ENCODE measurements at regions of chr15 and their contacts with region 1.

Region 1: DNA sequence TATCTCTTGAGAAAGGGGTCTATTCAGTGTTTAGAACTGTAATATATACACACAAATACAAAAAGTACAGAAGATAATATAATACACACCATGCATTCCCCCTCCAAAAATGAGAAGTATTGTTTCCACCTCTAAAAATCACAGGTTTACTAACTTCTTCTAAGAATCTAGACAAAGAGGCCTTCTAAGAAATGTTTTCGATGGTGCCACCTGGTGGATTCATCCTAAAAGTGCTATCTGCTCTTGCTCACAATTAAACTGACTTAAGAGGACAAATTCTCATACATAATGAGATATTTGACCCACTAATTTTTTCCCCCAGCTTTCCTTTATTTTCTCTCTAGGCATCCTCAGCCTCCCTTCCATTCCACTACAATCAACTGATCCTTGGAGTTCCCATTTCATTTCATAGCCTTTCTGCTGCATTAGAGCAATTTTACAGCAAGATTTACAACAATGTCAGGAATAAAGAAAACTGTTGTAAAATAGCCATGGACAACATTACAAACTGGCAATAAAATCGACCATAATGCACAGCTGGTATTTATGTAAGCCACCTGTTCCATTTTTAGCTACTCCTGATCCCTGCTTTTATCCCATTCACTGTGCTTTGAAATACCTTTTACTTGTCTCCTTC is 124.6 kb downstream of the ARRDC4 start:
- DNase-seq: peak; percentile 43
- ATAC-seq: no peak
- H3K4me3 ChIP-seq: no peak overlapping the region
- H3K27ac ChIP-seq: no peak overlapping the region
- H3K4me1 ChIP-seq: no peaks in the 10 kb centered on the region
- H3K27me3 ChIP-seq: no peaks in the 10 kb centered on the region
- CTCF ChIP-seq: peak; percentile 62
- EP300 ChIP-seq: no peak
- POLR2A ChIP-seq: no peak
- RAD21 ChIP-seq: no peak

Region 2: DNA sequence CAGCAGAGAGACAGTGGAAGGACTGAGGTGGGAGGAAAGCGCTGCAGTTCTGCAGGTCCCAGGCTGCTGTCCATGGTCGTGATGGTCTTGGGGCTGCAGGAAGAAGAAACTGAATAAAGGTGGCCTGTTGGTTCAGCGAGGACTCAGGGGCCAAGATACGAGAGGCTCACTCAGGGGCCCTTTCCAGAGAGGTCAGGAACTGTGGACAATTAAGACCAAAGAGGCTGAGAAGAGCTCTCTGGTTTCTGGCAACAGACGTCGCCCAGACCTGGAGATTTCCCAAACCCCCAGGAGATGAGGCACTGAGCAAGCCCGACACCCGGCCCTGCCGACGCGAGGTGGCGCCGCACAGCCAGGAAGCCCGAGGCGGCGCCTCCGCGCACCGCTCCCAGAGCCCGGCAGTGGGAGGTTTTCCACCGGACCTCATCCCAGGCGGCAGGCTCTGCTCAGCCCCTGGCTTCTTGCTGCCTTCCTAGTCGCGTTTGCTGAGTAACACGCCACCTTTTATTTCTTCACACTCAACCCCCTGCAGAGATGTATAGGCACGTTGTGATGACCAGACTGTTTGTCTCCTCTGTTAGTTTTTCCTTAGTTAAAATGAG is 181.0 kb before region 1 on chr15:
- CTCF ChIA-PET with region 1: interaction called, 30 read pairs
- POLR2A ChIA-PET with region 1: no interaction called
- in situ Hi-C with region 1: loop called (anchors 5 kb)
- intact Hi-C with region 1: loop called (anchors 1 kb)
- DNase-seq: peak; percentile 34
- ATAC-seq: peak; percentile 100
- H3K4me3 ChIP-seq: no peak overlapping the region
- H3K27ac ChIP-seq: no peak overlapping the region
- H3K4me1 ChIP-seq: no peaks in the 10 kb centered on the region; the same call in 1 of the 2 replicates
- H3K27me3 ChIP-seq: peaks cover 0 to 14% of the 10 kb centered on the region in 2 experiments; a peak in 2 of 5 replicates
- CTCF ChIP-seq: peak; percentile 87
- EP300 ChIP-seq: no peak
- POLR2A ChIP-seq: no peak
- RAD21 ChIP-seq: peak; percentile 88

Region 3: DNA sequence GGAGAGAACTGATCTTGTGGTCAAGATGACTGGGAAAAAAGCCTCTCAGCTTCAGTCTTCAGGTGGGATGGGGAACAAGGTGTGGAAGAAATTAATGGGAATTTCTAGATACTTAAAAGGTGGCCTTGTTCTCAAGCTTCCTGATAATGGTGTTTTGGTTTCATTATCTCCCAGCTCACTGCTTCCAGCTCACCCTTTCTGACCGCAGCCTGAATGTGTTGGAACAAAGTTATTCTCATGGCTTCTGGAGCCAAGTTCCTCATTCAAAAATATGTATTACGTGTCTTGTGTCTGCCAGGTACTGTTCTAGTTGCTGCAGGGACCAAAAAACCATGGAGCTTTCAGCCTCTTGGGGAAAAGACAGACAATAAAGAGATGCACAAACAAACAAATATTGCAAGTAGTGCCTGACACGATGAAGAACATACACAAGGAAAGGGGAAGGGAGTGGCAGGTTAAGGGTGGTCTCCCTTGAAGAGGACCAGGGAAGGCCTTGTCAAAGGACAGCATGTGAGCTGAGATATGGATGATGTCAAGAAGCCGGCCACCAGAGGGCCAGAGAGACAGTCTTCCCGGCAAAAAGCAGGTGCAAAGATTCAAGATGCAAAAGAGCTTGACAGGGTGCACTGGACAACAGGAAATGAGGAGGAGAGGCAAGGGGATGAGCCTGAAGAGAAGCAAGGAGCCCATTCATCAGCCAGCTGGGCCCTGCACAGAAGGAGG is 89.1 kb before region 1 on chr15:
- CTCF ChIA-PET with region 1: no interaction called
- POLR2A ChIA-PET with region 1: no interaction called
- in situ Hi-C with region 1: no loop called
- intact Hi-C with region 1: loop called (anchors 1 kb)
- DNase-seq: no peak
- ATAC-seq: peak; percentile 87
- H3K4me3 ChIP-seq: peak overlapping the region in 1 of 3 experiments; percentile 21; a peak in 2 of 6 replicates
- H3K27ac ChIP-seq: no peak overlapping the region
- H3K4me1 ChIP-seq: 0 out of 2 replicates have a peak, but pooled peaks cover 7% of the 10 kb centered on the region
- H3K27me3 ChIP-seq: no peaks in the 10 kb centered on the region
- CTCF ChIP-seq: peak; percentile 68
- EP300 ChIP-seq: no peak
- POLR2A ChIP-seq: no peak
- RAD21 ChIP-seq: peak; percentile 28; the same call in 1 of the 2 replicates

Region 4: DNA sequence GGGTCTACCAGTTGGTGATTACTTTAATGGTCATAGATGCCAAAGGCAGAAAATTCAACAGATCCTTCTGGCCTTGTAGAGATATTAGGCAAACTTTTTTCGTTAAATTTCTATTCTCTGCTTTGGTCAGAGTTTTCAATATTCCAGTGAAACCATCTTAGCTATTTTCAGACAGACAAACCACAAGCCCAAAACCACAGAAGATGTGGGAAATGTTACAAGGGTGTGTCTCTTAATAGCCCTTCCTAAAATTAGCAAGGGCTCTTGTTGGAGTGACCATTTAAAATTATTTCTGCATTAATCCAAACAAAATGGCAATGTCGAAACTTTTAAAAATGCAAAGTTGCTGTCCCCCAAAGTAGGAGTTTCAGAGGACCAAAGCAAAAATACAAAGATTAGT is 21.8 kb before region 1 on chr15:
- CTCF ChIA-PET with region 1: no interaction called
- POLR2A ChIA-PET with region 1: no interaction called
- in situ Hi-C with region 1: no loop called
- intact Hi-C with region 1: no loop called
- DNase-seq: no peak
- ATAC-seq: no peak
- H3K4me3 ChIP-seq: no peak overlapping the region
- H3K27ac ChIP-seq: no peak overlapping the region
- H3K4me1 ChIP-seq: no peaks in the 10 kb centered on the region
- H3K27me3 ChIP-seq: no peaks in the 10 kb centered on the region
- CTCF ChIP-seq: no peak
- EP300 ChIP-seq: no peak
- POLR2A ChIP-seq: no peak
- RAD21 ChIP-seq: no peak

Region 5: GRCh38 chr15:98103570-98103969 is 18.4 kb after region 1 on chr15:
- CTCF ChIA-PET with region 1: no interaction called
- POLR2A ChIA-PET with region 1: no interaction called
- in situ Hi-C with region 1: no loop called
- intact Hi-C with region 1: no loop called
- DNase-seq: no peak
- ATAC-seq: no peak
- H3K4me3 ChIP-seq: no peak overlapping the region
- H3K27ac ChIP-seq: no peak overlapping the region
- H3K4me1 ChIP-seq: no peaks in the 10 kb centered on the region
- H3K27me3 ChIP-seq: peaks cover 0 to 3% of the 10 kb centered on the region in 2 experiments; a peak in 1 of 5 replicates
- CTCF ChIP-seq: no peak
- EP300 ChIP-seq: no peak
- POLR2A ChIP-seq: no peak
- RAD21 ChIP-seq: no peak